Dendritic cell treated with granulocyte-macrophage colony-stimulating factor and Interleukin-4, amounts not matched to agents 40 ng/mL and 50 ng/mL, for 4 days (primary cell): ENCODE measurements at regions of chr5 and their contacts with region 1.

Region 1: DNA sequence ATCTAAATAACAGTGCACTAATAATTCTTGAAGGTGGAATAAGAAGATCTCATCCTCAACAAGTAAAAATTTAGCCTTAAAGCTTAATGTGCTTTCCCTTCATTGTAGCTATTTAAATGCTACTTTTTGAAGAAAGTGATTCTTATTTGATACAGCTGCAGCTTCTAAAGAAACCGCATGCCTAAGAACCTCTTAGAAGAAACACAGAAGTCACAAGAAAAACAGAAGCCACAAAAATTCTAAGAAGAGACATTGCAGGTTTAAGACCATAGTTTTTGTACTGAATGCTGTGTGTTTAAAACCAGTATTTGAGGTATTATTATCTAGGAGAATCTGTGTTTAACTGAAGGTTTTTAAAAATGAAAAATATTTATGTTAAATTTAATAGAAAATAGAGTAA is 68.3 kb downstream of the PPIP5K2 start:
- H3K4me3 Mint-ChIP-seq: no peak overlapping the region
- H3K27ac Mint-ChIP-seq: no peak overlapping the region
- H3K4me1 Mint-ChIP-seq: no peaks in the 10 kb centered on the region
- H3K27me3 Mint-ChIP-seq: no peaks in the 10 kb centered on the region

Region 2: DNA sequence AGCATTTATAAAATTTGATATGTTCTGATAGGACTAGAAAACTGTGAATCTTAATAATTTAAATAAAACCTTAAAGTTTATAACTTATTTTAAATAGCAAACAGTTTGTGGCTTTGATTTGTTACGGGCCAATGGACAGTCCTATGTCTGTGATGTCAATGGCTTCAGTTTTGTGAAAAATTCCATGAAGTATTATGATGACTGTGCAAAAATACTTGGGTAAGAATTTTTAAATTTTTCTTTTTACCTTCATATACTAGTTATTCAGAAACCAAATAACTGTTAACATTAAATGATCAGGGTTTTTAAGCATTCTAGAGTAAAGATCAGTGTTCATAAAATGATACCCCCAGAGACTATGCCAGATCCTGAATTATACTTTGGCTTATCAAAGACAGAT is 37.3 kb before region 1 on chr5:
- intact Hi-C with region 1: loop called (anchors 5 kb)
- H3K4me3 Mint-ChIP-seq: no peak overlapping the region
- H3K27ac Mint-ChIP-seq: no peak overlapping the region
- H3K4me1 Mint-ChIP-seq: no peaks in the 10 kb centered on the region
- H3K27me3 Mint-ChIP-seq: no peaks in the 10 kb centered on the region